Psoas muscle (tissue), 8 donors: ENCODE measurements at regions of chr19 and their contacts with region 1.

Region 1: GRCh38 chr19:1929021-1929742 is 11.8 kb upstream of the CSNK1G2 start:
- DNase-seq: peak; percentile 83 to 88
- ATAC-seq: peak; percentile 88 to 97 (median 90)
- H3K4me3 ChIP-seq: peak overlapping the region; percentile 56
- H3K27ac ChIP-seq: no peak overlapping the region
- H3K4me1 ChIP-seq: peaks cover 5% of the 10 kb centered on the region
- H3K27me3 ChIP-seq: no peaks in the 10 kb centered on the region
- CTCF ChIP-seq: peak; percentile 93

Region 2: GRCh38 chr19:1744822-1745563 is 184.2 kb before region 1 on chr19:
- intact Hi-C with region 1: no loop called
- DNase-seq: no peak
- ATAC-seq: no peak
- H3K4me3 ChIP-seq: no peak overlapping the region
- H3K27ac ChIP-seq: no peak overlapping the region
- H3K4me1 ChIP-seq: peaks cover 11% of the 10 kb centered on the region
- H3K27me3 ChIP-seq: peaks cover 0 to 78% (median 50%) of the 10 kb centered on the region in 3 donors
- CTCF ChIP-seq: no peak

Region 3: DNA sequence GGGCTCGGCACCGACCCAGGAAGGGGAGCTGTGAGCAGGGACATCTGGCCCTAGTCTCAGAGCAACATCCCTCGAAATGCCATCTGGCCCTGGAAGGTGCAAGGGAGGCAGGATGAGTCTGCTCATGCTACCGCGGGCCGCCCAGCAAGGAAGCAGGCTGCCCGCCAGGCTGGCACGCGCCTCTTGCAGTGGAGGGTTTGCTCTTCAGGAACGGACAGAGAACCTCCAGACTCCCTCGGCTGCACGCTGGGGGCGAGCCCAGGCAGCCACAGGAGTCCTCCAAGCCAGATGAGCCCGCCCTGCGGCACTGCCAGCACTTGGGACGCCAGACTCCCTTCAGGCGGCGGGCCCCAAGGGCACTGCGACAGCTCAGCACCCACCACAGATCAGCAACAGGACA is 107.0 kb before region 1 on chr19:
- intact Hi-C with region 1: no loop called
- DNase-seq: no peak
- ATAC-seq: no peak
- H3K4me3 ChIP-seq: no peak overlapping the region
- H3K27ac ChIP-seq: no peak overlapping the region
- H3K4me1 ChIP-seq: peaks cover 5% of the 10 kb centered on the region
- H3K27me3 ChIP-seq: no peaks in the 10 kb centered on the region
- CTCF ChIP-seq: no peak

Region 4: GRCh38 chr19:1910169-1910568 is 19.0 kb before region 1 on chr19:
- intact Hi-C with region 1: no loop called
- DNase-seq: no peak
- ATAC-seq: no peak
- H3K4me3 ChIP-seq: no peak overlapping the region
- H3K27ac ChIP-seq: no peak overlapping the region
- H3K4me1 ChIP-seq: peaks cover 8% of the 10 kb centered on the region
- H3K27me3 ChIP-seq: no peaks in the 10 kb centered on the region
- CTCF ChIP-seq: no peak

Region 5: GRCh38 chr19:2016041-2016807 is 87.0 kb after region 1 on chr19:
- intact Hi-C with region 1: loop called in 1 of 2 experiments (anchors 5 kb)
- DNase-seq: peak; percentile 77 to 89
- ATAC-seq: peak; percentile 80 to 87 (median 84)
- H3K4me3 ChIP-seq: peak overlapping the region; percentile 38
- H3K27ac ChIP-seq: peak overlapping the region; percentile 38
- H3K4me1 ChIP-seq: no peaks in the 10 kb centered on the region
- H3K27me3 ChIP-seq: no peaks in the 10 kb centered on the region
- CTCF ChIP-seq: no peak

Region 6: GRCh38 chr19:2070436-2070827 is 141.2 kb after region 1 on chr19:
- intact Hi-C with region 1: loop called (anchors 2 to 5 kb)
- DNase-seq: peak in 1 of 2 donors; percentile 54
- ATAC-seq: no peak
- H3K4me3 ChIP-seq: no peak overlapping the region
- H3K27ac ChIP-seq: no peak overlapping the region
- H3K4me1 ChIP-seq: peaks cover 7% of the 10 kb centered on the region
- H3K27me3 ChIP-seq: no peaks in the 10 kb centered on the region
- CTCF ChIP-seq: no peak

Region 7: DNA sequence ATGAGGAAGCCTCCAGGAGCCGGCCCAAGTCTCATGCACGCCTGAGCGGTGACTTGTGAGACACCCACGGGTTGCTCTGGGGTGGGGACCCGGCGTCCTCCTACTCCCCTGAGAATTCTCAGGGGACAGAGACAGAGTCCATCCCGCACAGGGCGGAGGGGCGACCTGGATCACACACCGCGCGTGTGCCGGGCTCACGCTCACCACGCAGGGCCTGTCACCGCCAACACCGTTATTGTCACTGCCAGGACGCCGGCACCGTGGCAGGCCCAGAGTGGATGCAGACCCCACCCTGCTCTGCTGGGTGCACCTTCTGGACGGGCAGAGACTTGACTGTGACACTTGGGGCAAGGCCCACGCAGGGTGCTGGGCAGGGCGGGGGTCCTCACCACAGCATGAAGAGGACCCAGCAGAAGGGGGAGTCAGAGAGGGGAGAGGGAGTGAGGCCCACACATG is 150.7 kb after region 1 on chr19:
- intact Hi-C with region 1: loop called in 1 of 2 experiments (anchors 5 kb)
- DNase-seq: no peak
- ATAC-seq: peak in 1 of 4 donors; percentile 10
- H3K4me3 ChIP-seq: no peak overlapping the region
- H3K27ac ChIP-seq: no peak overlapping the region
- H3K4me1 ChIP-seq: no peaks in the 10 kb centered on the region
- H3K27me3 ChIP-seq: no peaks in the 10 kb centered on the region
- CTCF ChIP-seq: no peak